Activated T-helper 2 cell treated with anti-CD3 and anti-CD28 coated beads, Interferon-gamma antibody, Interleukin-2, Interleukin-4, amounts not matched to agents 10 μg/mL and 5 μg/mL and 100 μg/mL, durations not matched to agents 14 hours and 24 hours and 36 hours (primary cell): ENCODE measurements at regions of chr12 and their contacts with region 1.

Region 1: DNA sequence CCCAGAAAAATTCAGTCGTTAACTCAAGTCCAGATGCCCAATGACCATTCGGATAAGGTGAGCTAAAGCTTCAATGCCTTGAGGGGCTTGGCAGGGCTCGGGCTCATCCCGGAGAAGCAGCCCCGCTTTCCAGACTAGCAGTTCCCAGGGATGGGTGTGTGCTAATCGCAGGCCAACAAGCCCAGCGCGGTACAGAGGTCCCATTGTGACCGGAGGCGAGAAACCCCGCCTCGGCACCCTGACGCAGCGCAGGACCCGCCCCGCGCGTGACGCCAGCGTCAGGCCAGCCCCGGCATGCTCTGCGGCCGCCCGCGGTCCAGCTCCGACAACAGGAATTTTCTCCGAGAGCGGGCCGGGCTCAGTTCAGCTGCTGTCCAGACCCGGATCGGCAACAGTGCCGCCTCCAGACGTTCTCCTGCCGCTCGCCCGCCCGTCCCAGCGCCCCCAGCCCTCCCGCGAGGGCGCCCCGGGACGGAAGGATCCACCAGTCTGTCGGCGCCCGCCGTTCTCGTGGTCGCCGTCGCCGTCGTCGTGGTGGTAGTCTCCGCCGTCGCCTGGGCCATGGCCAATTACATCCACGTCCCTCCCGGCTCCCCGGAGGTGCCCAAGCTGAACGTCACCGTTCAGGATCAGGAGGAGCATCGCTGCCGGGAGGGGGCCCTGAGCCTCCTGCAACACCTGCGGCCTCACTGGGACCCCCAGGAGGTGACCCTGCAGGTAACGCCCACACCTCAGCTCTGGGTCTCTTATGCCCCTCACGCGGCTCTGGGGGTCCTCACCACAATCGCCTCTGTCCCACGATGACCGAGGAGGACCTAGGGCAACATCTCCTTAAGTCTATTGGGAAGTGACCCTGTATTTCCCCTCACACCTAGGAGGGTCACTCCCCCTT is at the start of gene ETNK1:
- DNase-seq: peak; percentile 83
- H3K4me3 Mint-ChIP-seq: peak within 1 kb of the TSS; percentile 90
- H3K27ac Mint-ChIP-seq: peak within 1 kb of the TSS; percentile 89
- H3K4me1 Mint-ChIP-seq: peaks cover 33% of the 10 kb centered on the region
- H3K27me3 Mint-ChIP-seq: peaks cover 15% of the 10 kb centered on the region
- total RNA-seq, gene ETNK1: 120 and 122 TPM in 2 replicates

Region 2: GRCh38 chr12:22046090-22046967 is 578.8 kb before region 1 on chr12 and contains the start of gene CMAS:
- intact Hi-C with region 1: loop called (anchors 10 kb)
- DNase-seq: peak; percentile 64
- H3K4me3 Mint-ChIP-seq: peak within 1 kb of the TSS; percentile 95
- H3K27ac Mint-ChIP-seq: peak within 1 kb of the TSS; percentile 87
- H3K4me1 Mint-ChIP-seq: peaks cover 45% of the 10 kb centered on the region
- H3K27me3 Mint-ChIP-seq: no peaks in the 10 kb centered on the region
- total RNA-seq, gene CMAS: 36.2 and 37.7 TPM in 2 replicates

Region 3: DNA sequence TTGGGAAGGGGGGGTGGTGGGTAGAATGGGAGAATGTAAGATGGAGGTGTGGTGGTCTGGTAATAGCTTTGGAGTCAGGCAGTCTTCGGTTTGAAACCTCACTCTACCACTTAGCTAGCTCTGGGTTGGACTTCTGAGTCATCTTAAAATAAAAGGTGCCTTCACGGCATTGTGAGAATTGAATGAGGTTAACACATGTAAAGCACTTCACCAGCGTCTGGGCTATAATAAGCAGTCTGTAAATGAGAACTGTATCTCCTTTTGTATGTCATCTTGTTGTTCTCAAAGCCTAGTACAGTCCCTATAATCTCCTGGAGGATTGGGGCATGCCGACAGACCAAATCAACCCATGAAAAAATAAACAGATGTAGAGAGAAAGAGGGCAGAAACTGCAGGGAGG is 92.0 kb before region 1 on chr12:
- intact Hi-C with region 1: no loop called
- DNase-seq: no peak
- H3K4me3 Mint-ChIP-seq: no peak overlapping the region
- H3K27ac Mint-ChIP-seq: no peak overlapping the region
- H3K4me1 Mint-ChIP-seq: peaks cover 30% of the 10 kb centered on the region
- H3K27me3 Mint-ChIP-seq: no peaks in the 10 kb centered on the region

Region 4: DNA sequence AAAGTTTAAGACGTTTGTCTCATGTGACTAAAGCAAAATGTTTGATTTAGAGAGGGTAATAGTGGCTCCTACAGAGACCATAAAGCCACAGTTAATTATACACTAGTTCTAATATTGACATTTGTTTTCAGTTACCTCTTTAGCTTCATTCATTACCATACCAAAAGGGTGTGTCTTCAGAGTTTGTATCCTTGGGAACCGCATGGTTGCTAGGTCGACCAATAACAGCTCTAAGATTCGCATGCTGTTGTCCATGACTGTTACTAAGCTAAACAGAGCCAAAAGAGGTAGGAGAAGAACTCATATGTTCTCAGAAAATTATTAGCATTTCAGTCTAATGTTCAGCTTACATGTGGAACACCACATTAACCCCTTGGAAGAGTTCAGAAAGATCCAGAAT is 36.3 kb before region 1 on chr12:
- intact Hi-C with region 1: no loop called
- DNase-seq: no peak
- H3K4me3 Mint-ChIP-seq: no peak overlapping the region
- H3K27ac Mint-ChIP-seq: no peak overlapping the region
- H3K4me1 Mint-ChIP-seq: peaks cover 1% of the 10 kb centered on the region
- H3K27me3 Mint-ChIP-seq: peaks cover 6% of the 10 kb centered on the region

Region 5: DNA sequence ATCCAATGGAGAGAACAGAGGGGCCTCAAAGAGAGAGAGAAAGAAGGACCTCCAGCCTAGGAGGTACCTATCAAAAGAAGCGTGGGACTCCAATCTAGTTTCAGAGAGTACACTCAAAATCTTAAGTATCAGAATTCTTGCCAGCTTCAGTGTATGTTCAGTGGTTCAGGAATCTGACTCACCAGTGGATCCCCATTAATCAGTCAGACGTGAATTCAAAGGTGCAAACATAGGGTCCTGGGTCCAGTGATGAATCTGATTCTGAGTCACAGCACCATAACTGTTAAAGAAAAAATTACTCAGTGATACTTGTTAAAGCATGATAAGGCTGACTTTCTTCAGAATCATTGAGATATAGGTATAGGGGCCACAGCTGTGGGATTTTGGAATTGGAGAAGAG is 33.1 kb after region 1 on chr12:
- intact Hi-C with region 1: loop called (anchors 2 kb)
- DNase-seq: no peak
- H3K4me3 Mint-ChIP-seq: no peak overlapping the region
- H3K27ac Mint-ChIP-seq: peak overlapping the region; percentile 68
- H3K4me1 Mint-ChIP-seq: peaks cover 30% of the 10 kb centered on the region
- H3K27me3 Mint-ChIP-seq: no peaks in the 10 kb centered on the region

Region 6: DNA sequence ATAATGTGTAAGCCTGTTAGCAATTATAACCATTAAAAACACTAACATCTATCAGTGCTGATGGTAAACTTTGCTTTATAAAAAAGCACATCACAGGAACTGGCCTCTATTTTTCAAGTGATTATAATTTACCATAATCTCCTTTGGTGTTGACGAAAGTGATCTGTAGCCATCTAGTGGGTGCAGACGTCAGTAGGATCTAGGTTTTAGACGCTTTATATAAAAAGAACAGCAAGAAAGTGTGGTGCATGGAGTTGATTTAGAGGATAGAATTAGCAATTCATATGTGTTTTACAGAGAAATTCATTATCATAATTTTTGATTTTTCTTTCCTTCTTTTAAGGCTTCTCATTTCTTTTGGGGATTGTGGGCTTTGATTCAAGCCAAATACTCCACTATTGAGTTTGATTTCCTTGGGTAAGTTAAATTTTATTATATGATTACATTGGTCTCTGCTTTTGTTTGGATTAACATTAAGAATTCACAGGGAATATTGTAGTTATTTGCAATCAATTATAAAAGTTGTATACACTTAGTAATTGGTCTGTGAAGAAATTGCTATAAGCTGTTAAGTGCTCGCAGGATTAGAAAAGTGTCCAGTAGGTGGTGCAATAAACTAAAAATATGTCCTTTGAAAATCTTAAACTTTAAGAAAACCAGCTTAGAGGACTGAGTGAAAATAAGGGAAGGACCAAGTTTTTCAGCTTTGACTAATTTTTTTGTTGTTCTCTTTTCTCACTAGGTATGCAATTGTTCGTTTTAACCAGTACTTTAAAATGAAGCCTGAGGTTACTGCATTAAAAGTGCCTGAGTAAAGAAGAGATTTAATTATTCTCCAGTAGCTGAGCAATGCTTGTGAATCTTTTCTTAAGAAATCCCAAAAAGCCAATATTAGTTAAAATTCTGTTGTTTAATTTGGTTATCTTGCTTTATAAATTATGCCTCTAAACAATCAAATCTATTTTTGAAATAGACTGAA is 59.3 kb after region 1 on chr12:
- intact Hi-C with region 1: loop called (anchors 2 kb)
- DNase-seq: no peak
- H3K4me3 Mint-ChIP-seq: no peak overlapping the region
- H3K27ac Mint-ChIP-seq: peak overlapping the region; percentile 7
- H3K4me1 Mint-ChIP-seq: peaks cover 25% of the 10 kb centered on the region
- H3K27me3 Mint-ChIP-seq: no peaks in the 10 kb centered on the region

Region 7: GRCh38 chr12:22803725-22804124 is 178.6 kb after region 1 on chr12:
- intact Hi-C with region 1: no loop called
- DNase-seq: no peak
- H3K4me3 Mint-ChIP-seq: no peak overlapping the region
- H3K27ac Mint-ChIP-seq: no peak overlapping the region
- H3K4me1 Mint-ChIP-seq: no peaks in the 10 kb centered on the region
- H3K27me3 Mint-ChIP-seq: no peaks in the 10 kb centered on the region